ENCODE measurements at regions of chr17 and their contacts with region 1.

Region 1: DNA sequence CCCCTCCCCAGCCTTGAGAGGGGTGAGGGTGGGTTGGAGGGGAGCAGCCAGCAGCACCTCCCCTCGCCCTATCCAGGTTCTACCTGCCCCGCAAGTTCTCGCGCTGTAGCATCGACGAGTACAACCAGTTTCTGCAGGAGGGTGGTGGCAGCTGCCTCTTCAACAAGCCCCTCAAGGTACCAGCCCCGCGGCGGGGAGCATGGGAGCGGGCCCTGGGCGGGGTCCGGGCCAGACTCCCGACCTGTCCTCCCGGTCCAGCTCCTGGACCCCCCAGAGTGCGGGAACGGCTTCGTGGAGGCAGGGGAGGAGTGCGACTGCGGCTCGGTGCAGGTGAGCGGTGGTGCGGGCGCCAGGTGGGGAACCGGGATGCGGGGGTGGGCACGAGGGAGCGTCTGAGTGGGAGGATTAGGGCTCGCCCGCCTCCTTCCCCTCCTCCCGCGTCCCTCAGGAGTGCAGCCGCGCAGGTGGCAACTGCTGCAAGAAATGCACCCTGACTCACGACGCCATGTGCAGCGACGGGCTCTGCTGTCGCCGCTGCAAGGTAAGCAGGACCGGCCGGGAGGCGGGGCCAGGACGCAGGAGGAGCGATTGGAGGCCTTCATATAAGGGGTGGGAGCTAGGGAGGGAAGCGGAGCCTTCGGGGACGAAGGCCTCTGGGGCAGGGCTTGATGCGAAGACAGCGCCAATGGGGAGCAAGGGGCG is 16.5 kb downstream of the ADAM11 start:
- DNase-seq: peak; percentile 99
- ATAC-seq: peak; percentile 78 to 92
- H3K4me3 ChIP-seq: peak overlapping the region; percentile 54
- H3K27ac ChIP-seq: peak overlapping the region; percentile 13 to 64; a peak in 4 of 6 replicates
- H3K4me1 ChIP-seq: peaks cover 17% of the 10 kb centered on the region
- CTCF ChIP-seq: peak; percentile 34; the same call in 1 of the 3 replicates
- EP300 ChIP-seq: no peak
- POLR2A ChIP-seq: peak; percentile 58
- RAD21 ChIP-seq: peak in 1 of 2 experiments; percentile 8; a peak in 1 of 5 replicates

Region 2: DNA sequence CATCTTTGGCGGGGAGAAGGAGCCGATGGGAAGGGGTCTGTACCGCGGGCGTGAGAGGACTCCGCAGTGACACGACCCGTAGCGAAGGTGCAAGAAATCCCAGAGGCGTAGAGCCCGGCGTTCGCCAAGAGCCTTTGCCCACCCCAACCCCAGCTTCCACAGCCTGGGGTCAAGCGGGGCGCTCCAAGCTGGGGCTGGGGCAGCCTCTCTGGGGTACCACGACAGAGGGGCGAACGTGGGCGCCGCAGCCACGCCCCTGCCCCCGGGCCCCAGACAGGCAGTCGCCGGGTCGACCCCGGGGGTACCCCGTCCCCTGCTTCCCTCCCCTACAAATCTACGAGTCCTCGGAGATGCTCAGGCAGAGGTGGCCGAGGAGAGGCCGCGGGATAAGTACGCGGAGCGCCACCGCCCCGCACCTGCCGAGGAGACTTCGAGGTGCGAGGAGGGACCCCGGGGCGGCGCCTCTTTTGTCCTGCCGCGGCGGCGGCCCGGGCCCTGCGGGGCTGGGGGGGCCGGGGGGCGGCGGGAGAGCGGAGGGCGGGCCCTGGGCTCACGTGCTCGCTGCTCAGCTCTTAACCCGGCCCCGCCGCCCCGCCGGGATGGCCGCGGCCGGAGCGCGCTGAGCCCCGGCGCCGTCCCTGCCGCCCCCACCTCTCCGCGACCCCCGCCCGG is 16.7 kb before region 1 on chr17 and contains the start of gene ADAM11:
- CTCF ChIA-PET with region 1: interaction called, 65 read pairs
- POLR2A ChIA-PET with region 1: interaction called, 4 read pairs
- DNase-seq: peak in 1 of 2 experiments; percentile 74
- ATAC-seq: peak; percentile 39 to 58
- H3K4me3 ChIP-seq: peak within 1 kb of the TSS; percentile 64
- H3K27ac ChIP-seq: peak within 1 kb of the TSS; percentile 62 to 89; a peak in 5 of 6 replicates
- H3K4me1 ChIP-seq: peaks cover 10% of the 10 kb centered on the region; the same call in 1 of the 3 replicates
- CTCF ChIP-seq: no peak
- EP300 ChIP-seq: no peak
- POLR2A ChIP-seq: no peak
- RAD21 ChIP-seq: no peak
- polyA plus RNA-seq, gene ADAM11: 0.75 and 0.79 TPM in 2 replicates

Region 3: DNA sequence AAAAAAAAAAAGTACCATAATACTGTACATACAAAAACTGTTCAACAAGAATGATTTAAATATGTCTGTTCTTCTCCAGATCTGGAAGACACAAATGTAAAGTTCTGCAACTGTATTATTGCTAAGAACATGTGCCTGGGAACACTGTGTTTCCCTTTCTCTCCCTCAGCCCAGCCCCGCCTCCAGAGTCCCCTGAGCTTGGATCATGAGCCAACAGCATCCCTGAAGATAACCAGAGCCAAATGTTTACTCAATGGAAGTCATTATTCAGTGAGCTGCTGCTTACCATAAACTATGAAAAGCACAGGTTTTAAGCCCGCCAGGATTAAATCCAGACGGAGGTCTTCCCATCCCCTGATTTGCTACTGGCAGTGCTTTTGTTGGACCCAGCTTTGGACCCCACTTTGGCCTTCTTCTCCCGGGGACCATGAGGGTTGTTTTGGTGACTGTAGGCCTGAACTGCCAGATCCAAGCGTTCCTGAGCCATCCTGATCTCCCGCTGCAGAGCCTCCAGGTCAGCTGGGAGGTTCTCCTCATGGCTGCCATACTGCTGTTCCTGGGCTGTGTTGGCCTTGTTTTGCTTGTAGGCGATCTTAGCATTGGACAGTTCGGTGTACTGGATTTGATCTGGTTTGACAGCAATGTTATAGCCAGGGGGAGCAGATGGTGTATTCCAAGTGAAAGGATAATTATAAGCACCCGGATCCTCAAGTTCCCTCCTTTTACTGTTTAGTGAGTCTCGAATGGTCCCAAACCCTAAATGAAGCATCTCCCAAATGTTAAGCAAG is 29.2 kb after region 1 on chr17:
- CTCF ChIA-PET with region 1: interaction called, 98 read pairs
- POLR2A ChIA-PET with region 1: no interaction called
- DNase-seq: no peak
- ATAC-seq: no peak; a peak in 1 of 6 replicates
- H3K4me3 ChIP-seq: no peak overlapping the region
- H3K27ac ChIP-seq: no peak overlapping the region
- H3K4me1 ChIP-seq: peaks cover 8% of the 10 kb centered on the region; the same call in 2 of the 3 replicates
- CTCF ChIP-seq: no peak
- EP300 ChIP-seq: no peak
- POLR2A ChIP-seq: no peak
- RAD21 ChIP-seq: no peak

Region 4: DNA sequence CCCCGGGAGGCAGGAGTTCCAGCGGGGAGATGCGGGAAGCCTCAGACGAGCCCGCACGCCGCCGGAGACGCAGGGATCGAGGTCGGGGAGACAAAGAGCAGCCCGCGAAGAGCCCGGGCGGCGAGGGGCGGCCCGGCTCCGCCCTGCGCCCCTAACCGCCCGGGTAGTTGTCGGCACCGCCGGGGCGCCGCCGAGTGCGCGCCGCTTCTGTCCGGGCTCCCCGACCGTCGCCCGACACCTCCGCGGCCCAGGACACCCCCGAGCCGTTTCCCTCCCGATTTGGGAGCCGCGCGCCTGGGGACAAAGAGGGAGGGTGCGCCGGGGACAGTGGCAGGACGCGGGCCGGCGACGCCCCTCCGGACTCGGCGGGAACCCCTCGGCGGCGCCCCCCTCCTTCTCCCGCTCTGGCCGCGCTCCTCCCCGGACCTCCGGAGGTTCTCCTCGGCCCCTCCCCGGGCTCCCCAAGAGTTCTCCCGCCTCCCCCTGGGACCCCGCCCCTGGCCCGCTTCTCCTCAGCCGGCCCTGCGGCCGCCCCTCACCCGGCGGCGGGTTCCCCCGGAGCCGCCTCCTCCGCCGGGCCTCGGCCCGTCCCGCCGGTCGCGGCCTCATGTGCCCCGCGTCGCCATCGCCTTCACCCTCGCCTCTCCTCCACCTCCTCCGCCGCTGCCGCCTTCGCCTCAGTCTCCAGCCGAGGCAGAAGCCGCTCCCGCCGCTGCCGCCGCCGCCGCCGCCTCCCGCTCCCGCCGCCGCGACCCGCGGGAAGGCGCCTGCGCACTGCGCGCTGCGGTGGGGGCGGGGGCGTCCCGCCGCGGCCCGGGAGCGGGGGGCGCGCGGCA is 54.5 kb after region 1 on chr17 and contains the start of gene GJC1:
- CTCF ChIA-PET with region 1: interaction called, 122 read pairs
- POLR2A ChIA-PET with region 1: no interaction called
- DNase-seq: peak; percentile 48 to 49
- ATAC-seq: peak; percentile 73 to 76
- H3K4me3 ChIP-seq: peak within 1 kb of the TSS; percentile 87
- H3K27ac ChIP-seq: peak within 1 kb of the TSS; percentile 77 to 95
- H3K4me1 ChIP-seq: peaks cover 18% of the 10 kb centered on the region
- CTCF ChIP-seq: no peak
- EP300 ChIP-seq: no peak
- POLR2A ChIP-seq: peak; percentile 72
- RAD21 ChIP-seq: no peak
- polyA plus RNA-seq, gene GJC1: 22.1 and 30.4 TPM in 2 replicates

Region 5: GRCh38 chr17:44892250-44892649 is 117.0 kb after region 1 on chr17:
- CTCF ChIA-PET with region 1: interaction called, 1,787 read pairs
- POLR2A ChIA-PET with region 1: interaction called, 3 read pairs
- DNase-seq: no peak
- ATAC-seq: no peak
- H3K4me3 ChIP-seq: no peak overlapping the region
- H3K27ac ChIP-seq: no peak overlapping the region
- H3K4me1 ChIP-seq: peaks cover 26% of the 10 kb centered on the region
- CTCF ChIP-seq: no peak
- EP300 ChIP-seq: no peak
- POLR2A ChIP-seq: no peak
- RAD21 ChIP-seq: no peak